Heart left ventricle (tissue), 16 donors: ENCODE measurements at regions of chr2 and their contacts with region 1.

Region 1: DNA sequence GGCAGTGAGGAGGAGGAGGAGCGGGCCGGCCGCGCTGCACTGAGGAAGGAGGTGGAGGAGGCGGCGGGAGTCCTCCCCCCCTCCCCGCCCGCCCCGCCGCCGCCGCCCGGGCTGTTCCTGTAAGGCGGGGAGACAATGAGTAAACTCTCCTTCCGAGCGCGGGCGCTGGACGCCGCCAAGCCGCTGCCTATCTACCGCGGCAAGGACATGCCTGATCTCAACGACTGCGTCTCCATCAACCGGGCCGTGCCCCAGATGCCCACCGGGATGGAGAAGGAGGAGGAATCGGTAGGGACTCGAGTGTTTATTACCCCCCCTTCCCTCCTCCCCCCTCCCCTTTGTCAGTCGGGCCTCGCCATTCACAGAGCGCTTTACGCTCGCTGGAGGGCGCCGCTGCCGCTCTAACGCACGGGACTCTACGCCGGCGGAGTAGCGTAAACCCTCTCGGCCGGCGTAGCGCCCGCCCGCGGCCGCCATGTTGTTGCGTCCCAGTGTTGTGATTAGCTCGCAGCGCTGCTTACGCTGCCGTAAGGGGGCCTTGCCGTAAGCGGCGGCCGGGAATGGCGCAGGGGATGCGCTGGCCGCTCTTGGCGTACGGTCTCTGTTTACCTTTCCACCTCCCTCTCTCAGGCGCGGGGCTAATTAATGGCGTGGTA is 460 bp downstream of the EPC2 start:
- DNase-seq: peak; percentile 93 to 97 (median 94)
- ATAC-seq: peak; percentile 87 to 93 (median 89)
- H3K4me3 ChIP-seq: peak overlapping the region; percentile 77 to 99 (median 90)
- H3K27ac ChIP-seq: peak overlapping the region; percentile 98 to 100 (median 100)
- H3K4me1 ChIP-seq: peaks cover 0 to 53% (median 24%) of the 10 kb centered on the region in 12 donors
- H3K27me3 ChIP-seq: no peaks in the 10 kb centered on the region
- CTCF ChIP-seq: peak in 8 of 12 donors; percentile 7 to 57 (median 30)
- POLR2A ChIP-seq: peak in 1 of 2 donors; percentile 16

Region 2: DNA sequence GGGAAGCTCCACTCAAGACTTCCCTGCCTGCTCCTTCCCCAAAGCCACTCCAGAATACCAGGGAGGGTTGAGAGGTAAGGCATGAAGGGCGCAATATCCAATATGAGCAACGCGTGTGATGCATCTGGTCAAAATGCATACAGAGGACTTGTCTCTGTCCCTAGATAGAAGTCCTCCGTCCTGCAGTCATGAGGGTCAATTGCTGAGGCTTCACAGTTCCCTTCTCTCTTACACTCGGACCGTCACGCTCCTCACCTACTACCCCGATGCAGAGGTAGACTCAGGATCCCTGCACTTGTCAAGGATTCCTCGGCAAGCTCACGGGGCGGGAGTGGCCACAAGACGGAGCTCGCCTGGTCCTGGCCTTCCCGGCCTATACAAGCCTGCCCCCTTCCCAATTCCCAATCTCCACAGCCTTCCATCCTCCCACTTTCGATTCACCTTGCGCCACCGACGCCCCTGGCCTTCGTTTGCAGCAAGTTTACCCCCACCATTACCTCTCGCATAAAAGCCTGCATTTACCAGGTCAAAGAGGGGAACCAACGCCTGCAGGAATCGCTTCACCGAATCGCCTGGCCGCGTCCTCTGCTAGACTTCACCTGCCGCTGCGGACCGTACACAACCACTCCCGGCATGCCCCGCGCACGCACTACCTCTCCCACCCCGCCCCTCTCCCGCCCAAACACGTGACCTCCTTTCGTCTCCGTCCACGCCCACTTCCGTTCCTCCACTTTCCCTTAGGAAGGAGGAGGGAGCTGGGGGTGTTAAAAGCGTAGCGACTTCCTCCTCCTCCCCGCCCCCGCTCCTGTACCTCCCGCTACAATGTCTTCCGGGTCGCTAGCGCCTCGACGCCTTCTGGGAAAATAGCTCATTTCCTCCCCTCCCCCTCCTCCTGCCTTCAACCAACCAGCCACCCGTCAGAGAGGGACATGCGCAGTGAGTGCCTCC is 624.6 kb before region 1 on chr2 and contains the start of gene ORC4:
- intact Hi-C with region 1: loop called in 1 of 10 experiments (anchors 10 kb)
- DNase-seq: peak; percentile 97 to 99 (median 99)
- ATAC-seq: peak; percentile 98 to 99 (median 98)
- H3K4me3 ChIP-seq: peak within 1 kb of the TSS; percentile 73 to 94 (median 84)
- H3K27ac ChIP-seq: peak within 1 kb of the TSS; percentile 61 to 98 (median 93)
- H3K4me1 ChIP-seq: peaks cover 3 to 50% (median 34%) of the 10 kb centered on the region in 12 donors
- H3K27me3 ChIP-seq: no peaks in the 10 kb centered on the region
- CTCF ChIP-seq: peak in 10 of 12 donors; percentile 3 to 57 (median 34)
- POLR2A ChIP-seq: peak in 1 of 2 donors; percentile 54
- total RNA-seq, gene ORC4: 33.4 to 64.7 (median 44.1) TPM

Region 3: GRCh38 chr2:148590612-148591011 is 54.4 kb before region 1 on chr2:
- intact Hi-C with region 1: no loop called
- DNase-seq: no peak
- ATAC-seq: no peak
- H3K4me3 ChIP-seq: no peak overlapping the region
- H3K27ac ChIP-seq: no peak overlapping the region
- H3K4me1 ChIP-seq: no peaks in the 10 kb centered on the region
- H3K27me3 ChIP-seq: no peaks in the 10 kb centered on the region
- CTCF ChIP-seq: no peak
- POLR2A ChIP-seq: no peak

Region 4: GRCh38 chr2:148680462-148680861 is 35.5 kb after region 1 on chr2:
- intact Hi-C with region 1: loop called in 1 of 10 experiments (anchors 5 kb)
- DNase-seq: no peak
- ATAC-seq: no peak
- H3K4me3 ChIP-seq: no peak overlapping the region
- H3K27ac ChIP-seq: no peak overlapping the region
- H3K4me1 ChIP-seq: peaks cover 0 to 32% (median 18%) of the 10 kb centered on the region in 12 donors
- H3K27me3 ChIP-seq: no peaks in the 10 kb centered on the region
- CTCF ChIP-seq: no peak
- POLR2A ChIP-seq: no peak

Region 5: GRCh38 chr2:148813603-148814065 is 168.6 kb after region 1 on chr2:
- intact Hi-C with region 1: loop called in 1 of 10 experiments (anchors 10 kb)
- DNase-seq: no peak
- ATAC-seq: no peak
- H3K4me3 ChIP-seq: no peak overlapping the region
- H3K27ac ChIP-seq: no peak overlapping the region
- H3K4me1 ChIP-seq: peaks cover 0 to 39% (median 15%) of the 10 kb centered on the region in 12 donors
- H3K27me3 ChIP-seq: no peaks in the 10 kb centered on the region
- CTCF ChIP-seq: no peak
- POLR2A ChIP-seq: no peak

Region 6: GRCh38 chr2:148888003-148888501 is 243.0 kb after region 1 on chr2:
- intact Hi-C with region 1: loop called in 1 of 10 experiments (anchors 10 kb)
- DNase-seq: no peak
- ATAC-seq: no peak
- H3K4me3 ChIP-seq: peak overlapping the region; percentile 20 to 57 (median 46)
- H3K27ac ChIP-seq: no peak overlapping the region
- H3K4me1 ChIP-seq: peaks cover 0 to 12% (median 7%) of the 10 kb centered on the region in 12 donors
- H3K27me3 ChIP-seq: peaks cover 0 to 45% (median 20%) of the 10 kb centered on the region in 9 donors
- CTCF ChIP-seq: peak in 1 of 12 donors; percentile 12
- POLR2A ChIP-seq: no peak